H1 (cell line): ENCODE measurements at regions of chr19 and their contacts with region 1.

Region 1: GRCh38 chr19:2950286-2951124 is 5.7 kb upstream of the ZNF77 start:
- DNase-seq: peak; percentile 99 to 100
- H3K4me3 ChIP-seq: peak overlapping the region; percentile 73 to 98 (median 90)
- H3K27ac ChIP-seq: peak overlapping the region; percentile 74
- H3K4me1 ChIP-seq: peaks cover 0 to 6% (median 4%) of the 10 kb centered on the region in 4 experiments; a peak in 4 of 7 replicates
- H3K27me3 ChIP-seq: no peaks in the 10 kb centered on the region
- CTCF ChIP-seq: peak in 1 of 3 experiments; percentile 11; a peak in 1 of 4 replicates
- EP300 ChIP-seq: no peak
- POLR2A ChIP-seq: peak; percentile 87 to 96
- RAD21 ChIP-seq: no peak

Region 2: DNA sequence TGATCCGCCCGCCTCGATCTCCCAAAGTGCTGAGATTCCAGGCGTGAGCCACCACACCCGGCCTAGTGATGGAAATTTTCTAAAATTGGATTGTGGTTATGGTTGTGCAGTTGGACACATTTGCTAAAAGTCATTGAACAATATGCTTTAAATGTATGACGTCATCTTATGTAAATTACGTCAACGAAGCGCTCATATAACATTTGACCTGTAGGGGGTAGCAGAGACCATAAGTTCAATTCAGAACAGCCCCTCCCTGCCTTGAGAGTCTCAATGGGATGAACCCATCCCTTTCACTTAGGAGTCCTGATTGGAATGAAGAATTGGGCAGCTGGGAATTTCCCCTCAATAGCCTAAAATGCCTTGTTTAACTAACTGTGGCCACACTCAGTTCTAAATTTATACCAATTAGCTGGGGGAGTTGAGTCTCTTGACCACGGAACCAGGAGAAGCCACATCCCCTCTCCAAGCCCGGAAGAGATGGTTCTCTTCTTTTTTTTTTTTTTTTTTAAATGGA is 11.6 kb after region 1 on chr19:
- CTCF ChIA-PET with region 1: interaction called, 43 read pairs
- POLR2A ChIA-PET with region 1: interaction called, 4 read pairs
- DNase-seq: peak in 1 of 2 experiments; percentile 69
- H3K4me3 ChIP-seq: no peak overlapping the region
- H3K27ac ChIP-seq: no peak overlapping the region
- H3K4me1 ChIP-seq: no peaks in the 10 kb centered on the region
- H3K27me3 ChIP-seq: no peaks in the 10 kb centered on the region; a peak in 1 of 7 replicates
- CTCF ChIP-seq: peak in 2 of 3 experiments; percentile 82 to 83; a peak in 3 of 4 replicates
- EP300 ChIP-seq: no peak
- POLR2A ChIP-seq: no peak
- RAD21 ChIP-seq: peak; percentile 97 to 98

Region 3: DNA sequence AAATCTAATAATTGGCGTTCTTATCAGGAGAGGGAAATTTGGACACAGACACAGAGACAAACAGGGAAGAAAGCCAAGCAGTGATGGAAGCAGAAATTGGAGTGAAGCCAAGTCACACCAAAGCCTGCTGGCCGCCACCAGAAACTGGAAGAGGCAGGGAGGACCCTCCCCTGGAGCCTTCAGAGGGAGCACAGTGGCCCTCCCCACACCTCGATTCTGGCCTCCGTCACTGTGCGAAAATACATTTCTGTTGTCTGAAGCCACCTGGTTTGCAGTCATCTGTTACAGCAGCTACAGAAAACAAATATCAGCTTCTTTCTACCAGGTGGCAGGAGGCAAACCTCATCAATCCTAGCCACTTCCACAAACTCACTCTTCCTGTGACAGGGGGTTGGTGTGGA is 18.6 kb after region 1 on chr19:
- CTCF ChIA-PET with region 1: interaction called, 10 read pairs
- POLR2A ChIA-PET with region 1: interaction called, 3 read pairs
- DNase-seq: no peak
- H3K4me3 ChIP-seq: no peak overlapping the region
- H3K27ac ChIP-seq: no peak overlapping the region
- H3K4me1 ChIP-seq: no peaks in the 10 kb centered on the region
- H3K27me3 ChIP-seq: no peaks in the 10 kb centered on the region
- CTCF ChIP-seq: no peak
- EP300 ChIP-seq: no peak
- POLR2A ChIP-seq: no peak
- RAD21 ChIP-seq: no peak

Region 4: DNA sequence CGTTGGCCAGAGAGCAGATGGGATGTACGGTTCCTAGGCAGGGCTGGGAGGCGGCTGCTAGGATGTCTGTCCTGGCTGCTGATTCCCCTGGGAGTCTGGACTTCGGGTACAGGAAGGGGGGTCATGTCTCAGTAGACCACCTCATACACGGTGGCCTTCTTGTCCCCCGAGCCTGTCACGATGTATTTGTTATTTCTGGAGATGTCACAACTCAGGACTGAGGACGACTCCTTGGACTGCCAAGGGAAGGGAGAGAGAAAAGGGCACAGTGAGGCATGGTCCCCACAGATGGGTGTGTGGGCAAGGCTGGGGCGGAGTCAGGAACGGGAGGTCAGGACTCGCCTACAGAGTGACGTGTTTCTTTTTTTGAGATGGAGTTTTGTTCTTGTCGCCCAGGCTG is 47.2 kb after region 1 on chr19:
- CTCF ChIA-PET with region 1: no interaction called
- POLR2A ChIA-PET with region 1: no interaction called
- DNase-seq: no peak
- H3K4me3 ChIP-seq: no peak overlapping the region
- H3K27ac ChIP-seq: no peak overlapping the region
- H3K4me1 ChIP-seq: peaks cover 0 to 5% (median 0%) of the 10 kb centered on the region in 4 experiments; a peak in 1 of 7 replicates
- H3K27me3 ChIP-seq: no peaks in the 10 kb centered on the region
- CTCF ChIP-seq: no peak
- EP300 ChIP-seq: no peak
- POLR2A ChIP-seq: no peak
- RAD21 ChIP-seq: no peak

Region 5: GRCh38 chr19:3057306-3057714 is 106.8 kb after region 1 on chr19:
- CTCF ChIA-PET with region 1: interaction called, 13 read pairs
- POLR2A ChIA-PET with region 1: interaction called, 4 read pairs
- DNase-seq: peak in 1 of 2 experiments; percentile 64
- H3K4me3 ChIP-seq: peak overlapping the region in 1 of 4 experiments; percentile 22; a peak in 2 of 8 replicates
- H3K27ac ChIP-seq: no peak overlapping the region
- H3K4me1 ChIP-seq: peaks cover 3 to 36% (median 27%) of the 10 kb centered on the region in 4 experiments
- H3K27me3 ChIP-seq: no peaks in the 10 kb centered on the region; a peak in 1 of 7 replicates
- CTCF ChIP-seq: no peak
- EP300 ChIP-seq: peak in 1 of 2 experiments; percentile 98; a peak in 1 of 3 replicates
- POLR2A ChIP-seq: no peak
- RAD21 ChIP-seq: no peak

Region 6: GRCh38 chr19:3163230-3163886 is 212.9 kb after region 1 on chr19:
- CTCF ChIA-PET with region 1: interaction called, 13 read pairs
- POLR2A ChIA-PET with region 1: no interaction called
- DNase-seq: peak; percentile 53 to 85
- H3K4me3 ChIP-seq: peak overlapping the region in 3 of 4 experiments; percentile 36 to 54 (median 53); a peak in 6 of 8 replicates
- H3K27ac ChIP-seq: no peak overlapping the region
- H3K4me1 ChIP-seq: peaks cover 0 to 3% (median under 1%) of the 10 kb centered on the region in 4 experiments; a peak in 2 of 7 replicates
- H3K27me3 ChIP-seq: peaks cover 0 to 5% (median 2%) of the 10 kb centered on the region in 4 experiments; a peak in 3 of 7 replicates
- CTCF ChIP-seq: peak; percentile 94 to 97 (median 97)
- EP300 ChIP-seq: no peak
- POLR2A ChIP-seq: no peak
- RAD21 ChIP-seq: peak; percentile 95 to 97